ENCODE measurements at regions of chr10 and their contacts with region 1.

Region 1: DNA sequence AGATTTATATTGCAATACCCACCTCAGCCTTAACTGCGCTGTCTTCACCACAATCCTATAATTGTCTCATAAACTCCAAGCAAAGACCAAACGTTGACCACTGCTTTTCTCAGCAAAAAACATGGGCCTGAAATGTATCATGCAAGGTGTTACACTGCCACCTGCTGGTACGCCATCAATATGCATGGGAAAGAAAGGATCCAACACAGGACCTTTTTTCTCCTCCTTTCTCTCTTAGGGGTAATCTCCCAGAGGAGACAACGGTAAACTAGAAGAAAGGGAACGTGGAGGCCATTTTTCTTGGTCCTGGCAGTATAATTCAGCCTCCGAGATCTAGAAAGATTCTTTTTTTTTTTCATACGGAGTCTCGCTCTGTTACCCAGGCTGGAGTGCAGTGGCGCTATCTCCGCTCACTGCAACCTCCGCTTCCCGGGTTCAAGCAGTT is 79.1 kb upstream of the MPP7 start:
- DNase-seq: peak; percentile 59

Region 2: DNA sequence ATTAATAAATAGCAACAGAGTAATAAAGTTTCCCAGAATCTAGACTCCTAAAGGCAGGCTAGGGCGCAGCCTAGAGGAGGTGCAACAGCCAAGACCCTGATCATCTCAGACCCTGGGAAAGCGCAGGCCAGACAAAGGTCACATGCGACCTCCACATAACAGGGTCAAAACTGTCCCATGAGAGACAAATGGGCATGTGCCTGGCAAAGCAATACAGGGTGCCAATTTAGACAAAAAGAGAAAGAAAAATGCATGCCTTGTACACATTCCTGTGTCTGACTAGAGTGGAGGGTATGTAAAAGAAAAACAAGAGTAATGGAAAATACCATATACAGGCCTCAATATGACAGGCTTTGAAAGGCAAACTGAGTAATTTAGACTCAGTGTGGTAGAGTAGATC is 101.3 kb before region 1 on chr10:
- CTCF ChIA-PET with region 1: no interaction called
- POLR2A ChIA-PET with region 1: no interaction called
- DNase-seq: no peak

Region 3: GRCh38 chr10:28302638-28303488 is 79.1 kb before region 1 on chr10 and contains the start of gene MPP7:
- CTCF ChIA-PET with region 1: interaction called, 3 read pairs
- POLR2A ChIA-PET with region 1: interaction called, 13 read pairs
- DNase-seq: peak; percentile 85

Region 4: GRCh38 chr10:28393966-28394568 is 12.1 kb after region 1 on chr10:
- CTCF ChIA-PET with region 1: interaction called, 24 read pairs
- POLR2A ChIA-PET with region 1: no interaction called
- DNase-seq: peak; percentile 63